ENCODE measurements at regions of chr1 and their contacts with region 1.

Region 1: GRCh38 chr1:235504496-235505222 is 407 bp upstream of the B3GALNT2 start:
- DNase-seq: peak; percentile 96
- ATAC-seq: peak; percentile 86
- H3K4me3 ChIP-seq: peak overlapping the region; percentile 92
- H3K27ac ChIP-seq: peak overlapping the region; percentile 95
- H3K4me1 ChIP-seq: peaks cover 6% of the 10 kb centered on the region
- H3K27me3 ChIP-seq: no peaks in the 10 kb centered on the region
- CTCF ChIP-seq: peak; percentile 82 to 91 (median 86)
- EP300 ChIP-seq: peak in 1 of 2 experiments; percentile 51; a peak in 1 of 4 replicates
- POLR2A ChIP-seq: peak; percentile 86
- RAD21 ChIP-seq: peak; percentile 48; the same call in 1 of the 2 replicates

Region 2: DNA sequence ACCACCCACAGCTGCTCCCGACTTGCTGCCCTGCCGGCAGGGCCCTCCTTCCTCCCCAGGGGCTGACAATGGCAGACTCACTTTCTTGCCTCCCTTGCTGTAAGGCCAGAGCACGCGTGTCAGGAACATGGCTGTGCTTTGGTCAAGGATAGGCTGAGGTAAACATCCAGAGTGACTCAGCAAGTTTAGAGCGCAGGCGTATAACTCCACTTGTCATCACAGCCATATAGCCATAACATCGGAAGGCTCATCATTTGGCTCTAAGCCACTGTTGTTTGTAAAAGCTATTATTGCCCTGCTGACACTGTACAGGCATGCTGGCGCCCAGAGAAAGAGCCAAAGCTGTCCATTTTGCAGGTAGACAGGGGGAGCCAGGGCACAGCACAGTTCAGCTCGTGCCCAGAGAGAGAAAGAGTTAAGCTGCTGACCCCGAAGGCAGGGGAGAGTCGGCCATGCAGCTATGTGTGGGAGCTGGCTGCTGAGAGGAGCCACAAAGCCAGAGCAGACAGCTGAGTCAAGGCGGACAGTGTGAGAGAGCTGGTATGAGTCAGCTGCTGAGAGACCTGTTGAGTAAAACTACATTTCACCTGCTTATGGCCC is 84.4 kb after region 1 on chr1:
- CTCF ChIA-PET with region 1: no interaction called
- POLR2A ChIA-PET with region 1: no interaction called
- RAD21 ChIA-PET with region 1: no interaction called
- SMC1A ChIA-PET with region 1: no interaction called
- in situ Hi-C with region 1: no loop called
- intact Hi-C with region 1: no loop called
- DNase-seq: no peak
- ATAC-seq: no peak
- H3K4me3 ChIP-seq: no peak overlapping the region
- H3K27ac ChIP-seq: no peak overlapping the region
- H3K4me1 ChIP-seq: no peaks in the 10 kb centered on the region
- H3K27me3 ChIP-seq: no peaks in the 10 kb centered on the region; a peak in 1 of 4 replicates
- CTCF ChIP-seq: no peak
- EP300 ChIP-seq: no peak
- POLR2A ChIP-seq: no peak
- RAD21 ChIP-seq: no peak

Region 3: DNA sequence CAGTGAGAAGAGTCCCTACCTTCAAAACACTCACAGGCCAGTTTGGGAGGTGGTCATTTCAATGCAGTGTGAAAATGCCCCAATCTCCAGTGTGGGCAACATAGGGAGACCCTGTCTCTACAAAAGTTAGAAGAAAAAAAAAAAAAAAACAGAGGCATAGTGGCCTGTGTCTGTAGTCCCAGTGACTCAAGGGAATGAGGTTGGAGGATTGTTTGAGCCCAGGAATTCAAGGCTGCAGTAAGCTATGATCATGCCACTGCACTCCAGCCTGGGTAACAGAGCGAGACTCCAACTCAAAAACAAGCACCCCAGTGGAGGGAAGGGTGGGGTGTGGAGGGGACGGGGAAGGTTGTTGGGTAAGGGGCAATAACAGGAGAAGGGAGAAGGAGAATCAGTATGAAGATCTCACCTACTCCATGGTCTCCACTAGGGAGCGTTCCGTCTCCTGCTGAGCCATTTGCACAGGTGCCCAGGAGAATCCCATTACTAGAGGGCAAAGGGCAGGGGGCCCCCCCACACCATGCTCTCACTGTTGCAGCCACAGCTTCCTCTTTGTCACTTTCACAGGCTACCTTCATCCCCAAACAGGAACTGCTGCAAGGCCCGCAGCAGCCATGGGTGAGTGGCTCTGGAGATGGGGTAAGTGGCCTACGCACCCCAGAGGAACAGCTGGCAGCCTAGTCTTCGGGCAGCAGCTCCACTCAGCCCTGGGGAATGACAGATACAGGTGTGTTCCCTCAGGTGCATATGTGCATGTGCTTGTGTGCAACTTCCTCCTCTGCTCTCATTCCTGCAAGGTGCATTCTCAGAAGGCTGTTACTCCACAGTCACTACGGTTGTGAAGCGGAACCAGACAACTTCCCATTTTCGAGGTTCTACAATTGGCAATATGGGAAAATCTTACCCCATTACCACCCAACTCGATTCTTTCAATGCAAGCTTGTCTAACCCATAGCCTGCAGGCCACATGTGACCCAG is 449.9 kb after region 1 on chr1:
- CTCF ChIA-PET with region 1: interaction called, 3 read pairs
- POLR2A ChIA-PET with region 1: no interaction called
- RAD21 ChIA-PET with region 1: interaction called, 4 read pairs
- SMC1A ChIA-PET with region 1: no interaction called
- in situ Hi-C with region 1: no loop called
- intact Hi-C with region 1: loop called (anchors 2 kb)
- DNase-seq: peak; percentile 87
- ATAC-seq: peak; percentile 94
- H3K4me3 ChIP-seq: no peak overlapping the region
- H3K27ac ChIP-seq: peak overlapping the region; percentile 73
- H3K4me1 ChIP-seq: peaks cover 37% of the 10 kb centered on the region
- H3K27me3 ChIP-seq: no peaks in the 10 kb centered on the region
- CTCF ChIP-seq: peak; percentile 27 to 35 (median 33); a peak in 4 of 6 replicates
- EP300 ChIP-seq: peak; percentile 80 to 93
- POLR2A ChIP-seq: no peak
- RAD21 ChIP-seq: peak; percentile 16

Region 4: DNA sequence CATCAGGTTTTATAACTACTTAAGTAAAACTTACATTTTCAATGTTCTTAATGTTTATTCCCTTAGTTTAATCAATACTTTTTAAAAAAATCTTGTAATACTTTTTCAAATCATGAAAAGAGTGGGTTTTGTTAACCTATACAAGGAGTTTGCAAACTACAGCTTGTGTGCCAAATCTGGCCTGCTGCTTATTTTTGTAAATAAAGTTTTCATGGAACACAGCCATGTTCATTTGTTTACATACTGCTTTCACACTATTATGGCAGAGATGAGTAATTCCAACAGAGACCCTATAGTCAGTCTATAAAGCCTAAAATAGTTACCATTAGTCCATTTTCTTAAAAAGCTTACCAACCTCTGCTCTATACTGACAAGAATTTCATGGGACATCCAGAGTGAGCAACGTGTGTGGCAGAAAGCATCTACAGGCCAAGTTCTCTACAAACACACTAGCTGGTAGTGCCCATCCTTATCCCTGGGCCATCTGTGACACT is 734.5 kb after region 1 on chr1:
- CTCF ChIA-PET with region 1: no interaction called
- POLR2A ChIA-PET with region 1: no interaction called
- RAD21 ChIA-PET with region 1: no interaction called
- SMC1A ChIA-PET with region 1: no interaction called
- in situ Hi-C with region 1: no loop called
- intact Hi-C with region 1: no loop called
- DNase-seq: no peak
- ATAC-seq: no peak
- H3K4me3 ChIP-seq: no peak overlapping the region
- H3K27ac ChIP-seq: no peak overlapping the region
- H3K4me1 ChIP-seq: no peaks in the 10 kb centered on the region
- H3K27me3 ChIP-seq: no peaks in the 10 kb centered on the region; a peak in 1 of 4 replicates
- CTCF ChIP-seq: no peak
- EP300 ChIP-seq: no peak
- POLR2A ChIP-seq: no peak
- RAD21 ChIP-seq: no peak